ENCODE measurements at regions of chr14 and their contacts with region 1.

Region 1: DNA sequence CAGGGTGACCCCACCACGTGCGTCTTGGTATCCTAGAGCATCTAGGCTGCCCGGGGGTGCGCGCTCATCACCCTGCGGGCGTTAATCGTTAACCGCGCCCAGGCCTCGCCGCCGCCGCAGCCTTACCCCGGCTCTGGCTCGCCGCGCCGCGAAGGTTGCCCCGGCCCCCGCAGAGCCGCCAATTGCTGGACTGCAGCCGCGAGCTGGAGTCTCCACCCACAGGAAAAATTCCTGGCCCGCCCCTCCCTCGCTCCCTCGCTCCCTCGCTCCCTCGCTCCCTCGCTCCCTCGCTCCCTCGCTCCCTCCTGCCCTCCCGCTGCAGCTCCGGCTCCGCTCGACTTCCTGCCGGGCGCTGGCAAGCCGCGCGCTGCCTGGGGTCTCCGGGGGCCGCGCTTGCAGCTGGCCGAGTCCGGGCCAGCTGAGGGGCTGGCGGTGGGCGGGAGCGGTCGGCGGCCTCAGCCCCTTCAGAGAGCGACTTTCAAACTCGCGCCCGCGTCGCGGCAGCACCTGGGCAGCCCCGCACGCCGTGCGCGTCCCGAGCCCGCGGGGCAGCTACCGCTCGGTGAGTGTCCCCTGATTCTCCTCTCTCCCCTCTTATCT is at the start of gene PLEKHG3:
- DNase-seq: peak; percentile 70 to 88
- H3K4me3 ChIP-seq: peak within 1 kb of the TSS; percentile 97
- H3K27ac ChIP-seq: peak within 1 kb of the TSS; percentile 49
- H3K4me1 ChIP-seq: peaks cover 69% of the 10 kb centered on the region
- H3K27me3 ChIP-seq: no peaks in the 10 kb centered on the region
- CTCF ChIP-seq: no peak
- total RNA-seq, gene PLEKHG3: 59.3 and 61.7 TPM in 2 replicates

Region 2: GRCh38 chr14:64720131-64720576 is 15.9 kb after region 1 on chr14:
- CTCF ChIA-PET with region 1: no interaction called
- POLR2A ChIA-PET with region 1: interaction called, 4 read pairs
- intact Hi-C with region 1: loop called (anchors 1 kb)
- DNase-seq: peak; percentile 78 to 99
- H3K4me3 ChIP-seq: peak overlapping the region; percentile 11; the same call in 1 of the 2 replicates
- H3K27ac ChIP-seq: peak overlapping the region; percentile 88
- H3K4me1 ChIP-seq: peaks cover 97% of the 10 kb centered on the region
- H3K27me3 ChIP-seq: no peaks in the 10 kb centered on the region
- CTCF ChIP-seq: no peak

Region 3: DNA sequence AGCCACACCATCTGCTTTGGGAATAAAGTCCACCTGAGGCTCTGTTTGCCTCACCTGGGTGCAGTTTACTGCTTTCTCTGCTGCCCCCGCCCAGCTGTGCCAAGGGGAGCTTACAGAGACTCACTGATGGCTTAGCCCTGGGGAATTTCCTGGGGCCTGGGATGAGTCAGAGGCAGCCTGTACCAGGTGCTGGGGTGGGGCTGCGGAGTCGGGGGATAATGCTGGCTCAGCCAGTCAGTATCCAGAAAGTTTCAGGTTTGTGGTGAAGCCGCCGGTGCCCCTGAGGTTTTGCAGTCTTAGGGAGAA is 22.3 kb after region 1 on chr14:
- CTCF ChIA-PET with region 1: no interaction called
- POLR2A ChIA-PET with region 1: interaction called, 4 read pairs
- intact Hi-C with region 1: loop called (anchors 1 kb)
- DNase-seq: peak; percentile 91 to 92
- H3K4me3 ChIP-seq: no peak overlapping the region
- H3K27ac ChIP-seq: peak overlapping the region; percentile 53
- H3K4me1 ChIP-seq: peaks cover 56% of the 10 kb centered on the region
- H3K27me3 ChIP-seq: no peaks in the 10 kb centered on the region
- CTCF ChIP-seq: no peak